PC-3 (cell line): ENCODE measurements at regions of chr5 and their contacts with region 1.

Region 1: DNA sequence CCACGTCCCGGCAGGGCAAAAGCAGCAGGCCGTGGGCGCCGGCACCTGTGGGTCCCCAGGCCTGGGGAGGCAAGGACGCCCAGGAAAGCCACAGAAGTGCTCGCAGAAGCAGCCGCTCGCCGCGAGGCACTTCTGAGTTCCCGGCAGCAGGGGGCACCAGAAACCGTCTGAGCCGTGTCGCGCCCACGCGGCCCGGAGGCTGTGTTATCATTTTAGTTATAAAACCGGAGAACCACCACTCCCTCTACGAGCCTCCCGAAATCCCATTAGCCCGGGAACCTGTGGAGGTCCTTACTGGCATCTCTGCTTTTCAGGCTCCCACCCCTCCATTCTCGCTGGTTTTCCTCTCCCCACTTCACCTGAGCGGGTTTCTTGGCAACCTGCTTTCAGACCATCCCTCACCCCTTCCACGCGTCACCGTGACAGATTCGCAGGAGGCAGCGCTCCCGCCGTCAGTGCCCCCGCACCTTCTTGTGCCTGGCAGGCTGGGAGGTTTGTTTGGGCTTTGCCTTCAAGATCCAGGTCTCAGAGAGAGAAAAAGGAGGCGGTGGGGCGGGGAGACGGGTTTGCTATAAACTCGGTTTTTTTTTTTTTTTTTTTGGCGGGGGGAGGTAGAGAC is 2.3 kb downstream of the GDNF start:
- DNase-seq: peak; percentile 84
- ATAC-seq: peak; percentile 58
- H3K4me3 ChIP-seq: peak overlapping the region; percentile 70
- H3K27ac ChIP-seq: no peak overlapping the region
- H3K4me1 ChIP-seq: peaks cover 19% of the 10 kb centered on the region
- H3K27me3 ChIP-seq: peaks cover 85% of the 10 kb centered on the region
- CTCF ChIP-seq: peak; percentile 89

Region 2: DNA sequence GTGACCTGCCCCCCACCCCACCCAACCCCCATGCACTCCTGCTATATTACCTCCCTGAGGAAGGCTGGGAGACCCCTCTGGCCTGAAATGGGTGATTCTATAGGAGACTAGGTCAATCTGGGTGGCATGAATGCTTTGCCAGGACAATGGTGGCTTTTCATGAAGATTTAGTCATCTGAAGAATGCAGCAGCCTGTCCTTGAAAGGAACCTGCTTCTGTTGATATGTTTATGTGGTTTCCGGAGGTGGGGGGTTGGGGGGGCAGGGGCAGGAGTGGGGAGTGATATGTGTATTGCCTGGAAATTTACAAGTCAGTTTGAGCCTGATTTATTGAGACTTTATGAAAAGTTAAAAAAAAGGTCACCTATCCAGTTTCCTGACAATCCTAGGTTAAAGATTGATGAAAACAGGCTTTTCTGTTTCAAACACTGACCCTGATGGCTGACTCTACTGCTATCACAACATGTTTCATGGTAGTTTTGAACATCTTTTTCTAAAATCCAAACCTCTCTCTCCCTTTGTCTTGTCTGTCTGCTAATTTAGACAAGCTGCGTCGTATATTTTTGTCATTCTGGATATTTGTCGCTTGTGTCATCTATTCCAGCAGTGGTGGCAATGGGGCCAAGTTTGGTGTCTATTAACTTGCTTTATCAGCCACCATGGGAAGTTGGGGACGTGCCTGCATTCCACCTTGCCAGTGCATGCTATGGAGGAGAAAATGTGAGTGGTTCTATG is 267.1 kb after region 1 on chr5:
- CTCF ChIA-PET with region 1: no interaction called
- POLR2A ChIA-PET with region 1: no interaction called
- intact Hi-C with region 1: no loop called
- DNase-seq: peak; percentile 30
- ATAC-seq: no peak
- H3K4me3 ChIP-seq: no peak overlapping the region
- H3K27ac ChIP-seq: no peak overlapping the region
- H3K4me1 ChIP-seq: no peaks in the 10 kb centered on the region
- H3K27me3 ChIP-seq: peaks cover 18% of the 10 kb centered on the region; the same call in 1 of the 2 replicates
- CTCF ChIP-seq: no peak

Region 3: DNA sequence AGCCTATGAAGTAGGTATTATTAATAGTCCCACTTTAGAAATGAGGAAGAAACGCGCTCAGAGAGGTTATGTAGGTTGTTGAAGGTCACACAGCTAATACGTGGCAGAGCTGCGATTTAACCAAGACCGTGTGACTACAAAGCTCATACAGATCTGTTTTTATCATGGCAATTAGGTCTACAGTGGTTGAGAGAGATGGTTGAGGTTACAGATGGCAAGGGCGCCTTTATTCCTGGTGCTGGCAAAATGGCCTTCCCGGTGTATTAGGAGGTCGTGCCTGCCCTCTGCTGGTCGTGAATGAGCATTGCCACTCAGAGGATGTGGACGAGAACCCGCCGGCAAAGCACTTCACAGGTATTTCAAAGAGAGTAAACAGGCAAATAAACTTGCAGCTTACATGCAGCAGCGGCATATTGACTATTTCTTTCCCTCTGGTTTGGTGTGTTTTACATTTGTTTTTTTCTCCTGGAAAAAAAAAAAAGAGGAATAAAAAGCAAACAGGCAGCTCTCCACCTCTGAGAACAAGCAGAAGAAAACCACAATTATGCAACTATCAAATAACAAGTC is 355.6 kb after region 1 on chr5:
- CTCF ChIA-PET with region 1: no interaction called
- POLR2A ChIA-PET with region 1: no interaction called
- intact Hi-C with region 1: loop called (anchors 1 kb)
- DNase-seq: peak; percentile 85
- ATAC-seq: peak; percentile 72
- H3K4me3 ChIP-seq: no peak overlapping the region
- H3K27ac ChIP-seq: no peak overlapping the region
- H3K4me1 ChIP-seq: no peaks in the 10 kb centered on the region
- H3K27me3 ChIP-seq: peaks cover 75% of the 10 kb centered on the region
- CTCF ChIP-seq: peak; percentile 96

Region 4: DNA sequence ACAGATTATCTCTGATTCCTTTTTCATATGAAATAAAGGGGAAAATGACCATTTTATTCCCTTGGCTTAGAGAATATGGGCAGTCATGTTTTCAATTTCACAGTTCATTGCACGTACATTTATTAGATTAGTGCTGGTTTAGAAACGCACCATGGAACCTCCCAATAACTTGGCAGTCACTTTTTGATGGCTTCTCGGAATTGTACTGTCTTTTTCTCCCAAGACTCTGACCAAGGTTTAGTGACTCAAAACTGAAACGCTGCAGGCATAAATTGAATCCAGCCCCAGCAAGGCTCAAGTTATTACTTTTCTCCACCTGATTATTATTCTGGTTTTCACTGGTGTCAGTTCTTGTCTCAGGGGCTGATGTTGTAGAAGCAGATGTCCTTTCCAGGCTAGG is 365.2 kb after region 1 on chr5:
- CTCF ChIA-PET with region 1: no interaction called
- POLR2A ChIA-PET with region 1: interaction called, 10 read pairs
- intact Hi-C with region 1: no loop called
- DNase-seq: no peak
- ATAC-seq: no peak
- H3K4me3 ChIP-seq: no peak overlapping the region
- H3K27ac ChIP-seq: no peak overlapping the region
- H3K4me1 ChIP-seq: no peaks in the 10 kb centered on the region
- H3K27me3 ChIP-seq: peaks cover 83% of the 10 kb centered on the region
- CTCF ChIP-seq: no peak